ENCODE measurements at regions of chr6 and their contacts with region 1.

Region 1: GRCh38 chr6:156564127-156564806 is 212.9 kb upstream of the ARID1B start:
- DNase-seq: peak; percentile 86
- ATAC-seq: peak; percentile 100
- H3K4me3 ChIP-seq: no peak overlapping the region
- H3K4me3 Mint-ChIP-seq: no peak overlapping the region
- H3K27ac ChIP-seq: no peak overlapping the region
- H3K27ac Mint-ChIP-seq: no peak overlapping the region
- H3K4me1 ChIP-seq: peaks cover 2 to 12% of the 10 kb centered on the region in 2 donors
- H3K4me1 Mint-ChIP-seq: peaks cover 16% of the 10 kb centered on the region
- H3K27me3 ChIP-seq: no peaks in the 10 kb centered on the region
- H3K27me3 Mint-ChIP-seq: peaks cover 18% of the 10 kb centered on the region
- CTCF ChIP-seq: peak; percentile 98

Region 2: DNA sequence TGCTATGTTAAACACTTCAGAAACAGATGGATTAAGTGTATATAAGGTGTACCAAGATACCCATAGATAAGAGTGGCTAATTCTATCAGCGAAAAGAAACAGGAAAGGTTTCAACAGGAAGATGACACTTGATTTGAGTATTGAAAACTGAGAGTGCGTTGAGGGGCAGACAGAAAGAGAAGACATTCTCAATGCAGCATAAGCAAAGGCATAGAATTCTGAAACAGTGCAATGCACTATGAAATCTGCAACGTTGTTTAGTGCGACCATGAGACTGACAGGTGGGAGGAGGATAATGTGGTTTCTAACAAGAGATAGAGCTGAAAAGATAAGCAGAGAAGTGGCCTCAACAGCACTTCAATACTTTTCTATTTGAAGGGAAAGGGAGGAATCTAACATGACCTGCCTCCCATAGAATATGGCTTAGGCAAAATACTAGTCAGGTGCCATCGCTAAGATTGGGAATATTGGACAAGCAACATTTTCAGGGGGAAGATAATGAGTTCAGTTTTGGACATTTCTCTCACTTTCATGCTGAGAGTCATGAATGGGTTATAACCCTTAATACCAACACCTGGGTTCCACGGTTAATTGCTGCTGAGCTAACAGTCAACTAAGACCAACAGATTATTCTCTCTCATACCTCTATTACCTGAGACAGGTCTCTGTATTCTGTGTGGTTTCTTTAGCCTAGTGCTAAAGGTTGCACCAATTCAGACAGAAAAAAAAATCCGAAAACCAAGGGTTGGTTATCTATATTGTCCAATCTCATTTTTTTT is 100.0 kb before region 1 on chr6:
- CTCF ChIA-PET with region 1: no interaction called
- POLR2A ChIA-PET with region 1: interaction called, 11 read pairs
- intact Hi-C with region 1: no loop called
- DNase-seq: no peak
- ATAC-seq: no peak
- H3K4me3 ChIP-seq: no peak overlapping the region
- H3K4me3 Mint-ChIP-seq: no peak overlapping the region
- H3K27ac ChIP-seq: no peak overlapping the region
- H3K27ac Mint-ChIP-seq: no peak overlapping the region
- H3K4me1 ChIP-seq: no peaks in the 10 kb centered on the region
- H3K4me1 Mint-ChIP-seq: peaks cover 3% of the 10 kb centered on the region
- H3K27me3 ChIP-seq: peaks cover 0 to 8% (median 0%) of the 10 kb centered on the region in 4 experiments
- H3K27me3 Mint-ChIP-seq: peaks cover 23% of the 10 kb centered on the region
- CTCF ChIP-seq: no peak

Region 3: DNA sequence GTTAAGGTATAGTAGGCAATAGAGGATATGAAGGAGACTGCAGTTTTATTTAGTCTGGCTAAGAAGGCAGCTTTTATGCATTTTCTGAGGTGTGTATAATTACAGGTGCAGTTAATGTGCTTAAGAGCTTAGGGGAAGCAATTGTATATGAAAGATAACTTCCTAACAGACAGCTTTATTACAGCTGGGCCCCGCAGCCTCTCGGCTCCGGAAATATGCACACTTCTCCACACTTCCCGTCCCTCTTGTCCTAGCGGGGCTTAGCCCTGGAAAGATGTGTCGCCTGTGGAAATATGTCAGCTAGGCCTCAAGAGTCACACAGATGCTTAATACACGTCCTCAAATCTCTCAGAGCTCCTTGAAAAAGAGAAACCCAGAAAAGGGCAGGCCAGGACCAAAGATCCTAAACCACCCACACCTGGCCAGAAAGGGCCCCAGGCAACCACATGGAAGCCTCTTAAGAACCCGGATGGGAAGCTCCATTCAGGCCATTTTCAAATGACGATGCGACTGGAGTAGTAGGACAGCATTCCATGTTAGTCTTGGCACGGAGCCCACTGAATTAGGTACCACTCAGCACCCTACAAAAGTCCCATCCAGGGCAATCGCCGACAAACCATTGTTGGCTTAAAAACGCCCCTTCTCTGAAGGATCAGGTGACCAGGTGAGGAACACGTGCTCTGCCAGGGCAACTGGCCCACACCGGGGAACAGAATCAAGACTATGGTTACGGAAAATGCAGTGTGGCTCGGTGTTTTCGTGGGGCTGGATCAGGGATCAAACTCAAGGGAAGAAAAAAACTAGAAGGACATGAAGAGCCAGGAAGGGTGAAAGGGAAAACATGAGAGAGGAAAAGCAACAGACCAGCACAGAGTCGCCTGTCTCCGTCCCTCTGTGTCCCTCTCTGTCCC is 34.8 kb after region 1 on chr6:
- CTCF ChIA-PET with region 1: no interaction called
- POLR2A ChIA-PET with region 1: no interaction called
- intact Hi-C with region 1: no loop called
- DNase-seq: no peak
- ATAC-seq: no peak
- H3K4me3 ChIP-seq: peak overlapping the region in 1 of 5 experiments; percentile 3
- H3K4me3 Mint-ChIP-seq: peak overlapping the region; percentile 21
- H3K27ac ChIP-seq: no peak overlapping the region
- H3K27ac Mint-ChIP-seq: no peak overlapping the region
- H3K4me1 ChIP-seq: peaks cover 0 to 11% of the 10 kb centered on the region in 2 donors
- H3K4me1 Mint-ChIP-seq: peaks cover 14% of the 10 kb centered on the region
- H3K27me3 ChIP-seq: no peaks in the 10 kb centered on the region
- H3K27me3 Mint-ChIP-seq: peaks cover 4% of the 10 kb centered on the region
- CTCF ChIP-seq: no peak

Region 4: GRCh38 chr6:156634951-156635371 is 70.7 kb after region 1 on chr6:
- CTCF ChIA-PET with region 1: interaction called, 3 read pairs
- POLR2A ChIA-PET with region 1: no interaction called
- intact Hi-C with region 1: loop called (anchors 5 kb)
- DNase-seq: peak; percentile 17
- ATAC-seq: no peak
- H3K4me3 ChIP-seq: peak overlapping the region in 3 of 5 experiments; percentile 10 to 37 (median 35)
- H3K4me3 Mint-ChIP-seq: peak overlapping the region; percentile 84
- H3K27ac ChIP-seq: peak overlapping the region; percentile 77 to 85
- H3K27ac Mint-ChIP-seq: peak overlapping the region; percentile 94
- H3K4me1 ChIP-seq: peaks cover 44 to 48% of the 10 kb centered on the region in 2 donors
- H3K4me1 Mint-ChIP-seq: peaks cover 51% of the 10 kb centered on the region
- H3K27me3 ChIP-seq: no peaks in the 10 kb centered on the region
- H3K27me3 Mint-ChIP-seq: no peaks in the 10 kb centered on the region
- CTCF ChIP-seq: no peak

Region 5: DNA sequence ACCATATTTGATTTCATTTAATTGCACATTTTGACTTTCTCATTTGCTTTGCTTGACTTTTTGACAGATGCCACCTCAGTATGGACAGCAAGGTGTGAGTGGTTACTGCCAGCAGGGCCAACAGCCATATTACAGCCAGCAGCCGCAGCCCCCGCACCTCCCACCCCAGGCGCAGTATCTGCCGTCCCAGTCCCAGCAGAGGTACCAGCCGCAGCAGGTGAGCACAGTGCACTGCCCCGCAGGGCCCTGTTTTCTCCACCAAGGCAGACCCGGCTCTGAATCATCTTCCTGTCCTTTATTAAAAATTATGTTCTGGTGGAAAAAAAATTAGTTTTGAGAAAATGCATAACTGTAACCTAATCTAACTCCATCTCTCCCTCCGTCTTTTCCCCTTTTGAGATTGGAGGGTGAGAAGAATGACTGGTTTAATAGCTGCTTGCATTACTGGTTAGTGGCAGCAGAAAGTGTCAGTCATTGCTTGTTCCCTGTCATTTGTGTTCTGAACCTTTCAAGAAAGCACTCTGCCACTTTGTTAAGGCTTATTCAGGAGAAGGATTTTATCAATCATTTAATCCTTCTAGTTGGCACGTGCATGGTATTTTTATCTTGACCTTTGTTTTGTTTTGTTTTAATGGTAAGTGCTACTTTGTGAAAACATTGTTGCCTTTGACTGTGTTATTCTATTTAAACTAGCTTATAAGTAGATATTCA is 337.2 kb after region 1 on chr6:
- CTCF ChIA-PET with region 1: no interaction called
- POLR2A ChIA-PET with region 1: no interaction called
- intact Hi-C with region 1: loop called (anchors 10 kb)
- DNase-seq: no peak
- ATAC-seq: no peak
- H3K4me3 ChIP-seq: no peak overlapping the region
- H3K4me3 Mint-ChIP-seq: no peak overlapping the region
- H3K27ac ChIP-seq: peak overlapping the region in 1 of 2 donors; percentile 11
- H3K27ac Mint-ChIP-seq: peak overlapping the region; percentile 32
- H3K4me1 ChIP-seq: no peaks in the 10 kb centered on the region
- H3K4me1 Mint-ChIP-seq: peaks cover 33% of the 10 kb centered on the region
- H3K27me3 ChIP-seq: no peaks in the 10 kb centered on the region
- H3K27me3 Mint-ChIP-seq: no peaks in the 10 kb centered on the region
- CTCF ChIP-seq: no peak

Region 6: GRCh38 chr6:157021344-157021992 is 457.2 kb after region 1 on chr6:
- CTCF ChIA-PET with region 1: interaction called, 4 read pairs
- POLR2A ChIA-PET with region 1: no interaction called
- intact Hi-C with region 1: loop called (anchors 1 kb)
- DNase-seq: peak; percentile 93
- ATAC-seq: peak; percentile 80
- H3K4me3 ChIP-seq: peak overlapping the region; percentile 84 to 97 (median 87)
- H3K4me3 Mint-ChIP-seq: peak overlapping the region; percentile 94
- H3K27ac ChIP-seq: peak overlapping the region; percentile 98 to 100
- H3K27ac Mint-ChIP-seq: peak overlapping the region; percentile 99
- H3K4me1 ChIP-seq: peaks cover 33 to 40% of the 10 kb centered on the region in 2 donors
- H3K4me1 Mint-ChIP-seq: peaks cover 63% of the 10 kb centered on the region
- H3K27me3 ChIP-seq: no peaks in the 10 kb centered on the region
- H3K27me3 Mint-ChIP-seq: no peaks in the 10 kb centered on the region
- CTCF ChIP-seq: peak; percentile 50

Region 7: DNA sequence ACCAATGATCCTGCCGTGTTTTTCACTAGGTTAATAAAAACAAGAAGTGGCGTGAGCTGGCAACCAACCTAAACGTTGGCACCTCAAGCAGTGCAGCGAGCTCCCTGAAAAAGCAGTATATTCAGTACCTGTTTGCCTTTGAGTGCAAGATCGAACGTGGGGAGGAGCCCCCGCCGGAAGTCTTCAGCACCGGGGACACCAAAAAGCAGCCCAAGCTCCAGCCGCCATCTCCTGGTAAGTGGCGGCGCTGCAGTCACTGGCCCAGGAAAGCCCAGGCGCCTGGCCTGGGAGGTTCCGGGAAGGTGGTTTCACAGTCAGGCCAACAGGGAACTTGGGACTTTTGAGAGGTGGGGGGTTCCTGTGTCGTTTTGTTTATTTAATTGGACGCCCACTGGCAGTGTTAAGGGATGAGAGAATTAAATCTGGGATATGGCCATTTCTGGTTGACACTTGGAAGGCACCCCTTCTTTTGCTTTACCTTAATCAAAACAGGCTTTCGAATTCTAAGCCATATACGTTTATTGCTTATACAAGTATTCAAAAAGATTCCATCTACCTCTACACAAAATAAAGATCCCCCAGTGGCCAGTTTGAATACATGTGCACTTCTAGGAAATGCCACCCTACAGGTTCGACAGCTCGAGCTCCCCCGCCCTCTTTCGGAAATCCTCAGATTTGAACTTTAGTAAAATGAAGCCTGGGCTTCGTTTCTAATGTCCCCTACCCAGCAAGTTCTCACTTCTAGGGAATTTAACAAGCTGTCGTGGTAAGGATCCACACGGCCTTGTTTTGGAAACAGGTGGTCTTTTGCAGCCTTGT is 620.1 kb after region 1 on chr6:
- CTCF ChIA-PET with region 1: interaction called, 5 read pairs
- POLR2A ChIA-PET with region 1: no interaction called
- intact Hi-C with region 1: loop called (anchors 2 kb)
- DNase-seq: peak; percentile 51
- ATAC-seq: no peak
- H3K4me3 ChIP-seq: no peak overlapping the region
- H3K4me3 Mint-ChIP-seq: no peak overlapping the region
- H3K27ac ChIP-seq: no peak overlapping the region
- H3K27ac Mint-ChIP-seq: no peak overlapping the region
- H3K4me1 ChIP-seq: no peaks in the 10 kb centered on the region
- H3K4me1 Mint-ChIP-seq: peaks cover 2% of the 10 kb centered on the region
- H3K27me3 ChIP-seq: no peaks in the 10 kb centered on the region
- H3K27me3 Mint-ChIP-seq: no peaks in the 10 kb centered on the region
- CTCF ChIP-seq: peak; percentile 76